ENCODE measurements at regions of chr16 and their contacts with region 1.

Region 1: DNA sequence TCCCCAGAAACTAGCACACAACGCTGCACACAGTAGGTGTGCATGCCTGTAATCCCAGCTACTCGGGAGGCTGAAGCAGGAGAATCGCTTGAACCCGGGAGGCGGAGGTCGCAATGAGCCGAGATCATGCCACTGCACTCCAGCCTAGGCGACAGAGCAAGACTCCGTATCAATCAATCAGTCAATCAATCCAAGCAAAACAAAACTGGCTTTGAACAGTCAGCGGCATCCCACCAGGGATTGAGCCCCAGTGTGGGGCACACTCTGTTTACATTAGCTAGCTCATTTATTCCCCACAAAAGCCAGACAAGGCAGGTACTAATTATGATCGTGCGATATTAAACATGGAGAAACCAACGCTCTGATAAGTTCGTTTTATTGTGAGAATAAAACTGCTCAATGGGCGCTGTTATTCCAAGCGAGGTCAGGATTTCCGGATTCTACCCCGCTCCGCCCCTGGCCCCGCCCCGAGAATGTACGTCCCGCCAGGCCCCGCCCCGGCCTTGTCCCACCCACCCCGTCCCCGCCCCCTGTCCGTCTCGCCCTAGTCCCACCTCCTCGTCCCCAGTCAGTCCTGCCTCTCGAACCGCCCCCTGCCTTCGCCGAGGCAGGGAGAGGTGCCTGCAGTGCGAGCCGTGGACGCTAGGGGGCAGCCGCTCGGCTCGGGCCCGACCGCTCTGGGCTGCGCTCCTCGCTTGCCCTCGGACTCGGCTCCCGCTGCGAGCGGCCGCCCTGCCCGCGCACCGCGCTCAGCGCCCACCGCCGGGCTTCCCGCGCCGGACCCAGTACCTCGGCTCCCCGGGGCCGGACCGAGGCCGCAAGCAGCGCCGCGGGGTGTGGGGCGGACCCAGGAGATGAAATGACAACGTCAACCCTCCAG is at the start of gene VPS4A:
- DNase-seq: peak; percentile 89
- ATAC-seq: peak; percentile 96
- H3K4me3 ChIP-seq: peak within 1 kb of the TSS; percentile 99
- H3K27ac ChIP-seq: peak within 1 kb of the TSS; percentile 82
- H3K4me1 ChIP-seq: no peaks in the 10 kb centered on the region
- H3K27me3 ChIP-seq: no peaks in the 10 kb centered on the region
- CTCF ChIP-seq: peak; percentile 81 to 96 (median 92)
- EP300 ChIP-seq: no peak
- POLR2A ChIP-seq: peak; percentile 88
- RAD21 ChIP-seq: peak; percentile 38
- polyA plus RNA-seq, gene VPS4A: 5.2 to 8.7 TPM

Region 2: GRCh38 chr16:69386596-69386995 is 75.7 kb after region 1 on chr16:
- CTCF ChIA-PET with region 1: interaction called, 4 read pairs
- POLR2A ChIA-PET with region 1: no interaction called
- RAD21 ChIA-PET with region 1: interaction called, 3 read pairs
- SMC1A ChIA-PET with region 1: no interaction called
- in situ Hi-C with region 1: no loop called
- intact Hi-C with region 1: loop called (anchors 2 kb)
- DNase-seq: no peak
- ATAC-seq: no peak
- H3K4me3 ChIP-seq: peak overlapping the region; percentile 93; the same call in 1 of the 2 replicates
- H3K27ac ChIP-seq: no peak overlapping the region
- H3K4me1 ChIP-seq: peaks cover 9% of the 10 kb centered on the region; the same call in 1 of the 2 replicates
- H3K27me3 ChIP-seq: no peaks in the 10 kb centered on the region
- CTCF ChIP-seq: no peak
- EP300 ChIP-seq: no peak
- POLR2A ChIP-seq: no peak
- RAD21 ChIP-seq: no peak